ENCODE measurements at regions of chr11 and their contacts with region 1.

Region 1: DNA sequence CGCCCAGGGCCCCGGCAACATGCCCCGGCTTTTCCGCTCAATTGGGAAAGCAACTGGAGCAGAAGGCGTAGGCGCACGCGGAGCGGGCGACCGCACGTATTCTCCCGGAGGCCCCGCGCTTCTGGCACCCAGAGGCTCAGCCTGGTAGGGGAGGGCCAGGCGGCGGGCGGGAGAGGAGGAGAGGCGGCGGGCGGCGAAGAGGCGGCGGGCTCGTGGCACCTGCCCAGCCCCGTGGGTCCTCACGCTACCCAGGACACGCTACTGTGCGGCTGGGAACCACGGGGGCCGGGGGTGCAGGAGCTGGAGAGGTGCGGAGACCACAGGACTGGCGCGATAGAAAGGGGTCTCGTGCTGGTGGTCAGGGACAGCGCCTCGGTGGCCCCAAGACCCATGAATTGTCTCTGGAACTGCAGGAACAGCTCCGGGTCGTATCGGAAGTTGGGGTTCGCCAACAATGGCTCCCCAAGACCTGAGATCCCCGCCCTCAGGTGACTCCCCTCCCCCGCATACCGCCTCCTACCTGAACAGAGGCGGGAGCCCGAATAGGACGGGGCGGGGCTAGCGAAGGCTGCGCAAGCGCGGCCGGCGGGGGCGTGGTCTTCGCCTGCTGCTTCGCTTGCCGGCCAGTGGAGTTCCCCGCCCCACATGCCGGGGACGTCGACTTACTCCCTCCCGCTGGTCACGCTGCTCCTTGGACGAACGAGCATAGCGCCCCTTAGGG is at the start of gene SLC37A4:
- DNase-seq: peak; percentile 97
- H3K4me3 Mint-ChIP-seq: peak within 1 kb of the TSS; percentile 75
- H3K27ac Mint-ChIP-seq: peak within 1 kb of the TSS; percentile 70
- H3K4me1 Mint-ChIP-seq: peaks cover 15% of the 10 kb centered on the region
- H3K27me3 Mint-ChIP-seq: no peaks in the 10 kb centered on the region
- CTCF ChIP-seq: peak; percentile 71
- total RNA-seq, gene SLC37A4: 6.8 and 10.0 TPM in 2 replicates

Region 2: GRCh38 chr11:118649941-118650340 is 380.5 kb before region 1 on chr11:
- CTCF ChIA-PET with region 1: no interaction called
- POLR2A ChIA-PET with region 1: no interaction called
- intact Hi-C with region 1: no loop called
- DNase-seq: no peak
- H3K4me3 Mint-ChIP-seq: no peak overlapping the region
- H3K27ac Mint-ChIP-seq: no peak overlapping the region
- H3K4me1 Mint-ChIP-seq: no peaks in the 10 kb centered on the region
- H3K27me3 Mint-ChIP-seq: no peaks in the 10 kb centered on the region
- CTCF ChIP-seq: no peak

Region 3: DNA sequence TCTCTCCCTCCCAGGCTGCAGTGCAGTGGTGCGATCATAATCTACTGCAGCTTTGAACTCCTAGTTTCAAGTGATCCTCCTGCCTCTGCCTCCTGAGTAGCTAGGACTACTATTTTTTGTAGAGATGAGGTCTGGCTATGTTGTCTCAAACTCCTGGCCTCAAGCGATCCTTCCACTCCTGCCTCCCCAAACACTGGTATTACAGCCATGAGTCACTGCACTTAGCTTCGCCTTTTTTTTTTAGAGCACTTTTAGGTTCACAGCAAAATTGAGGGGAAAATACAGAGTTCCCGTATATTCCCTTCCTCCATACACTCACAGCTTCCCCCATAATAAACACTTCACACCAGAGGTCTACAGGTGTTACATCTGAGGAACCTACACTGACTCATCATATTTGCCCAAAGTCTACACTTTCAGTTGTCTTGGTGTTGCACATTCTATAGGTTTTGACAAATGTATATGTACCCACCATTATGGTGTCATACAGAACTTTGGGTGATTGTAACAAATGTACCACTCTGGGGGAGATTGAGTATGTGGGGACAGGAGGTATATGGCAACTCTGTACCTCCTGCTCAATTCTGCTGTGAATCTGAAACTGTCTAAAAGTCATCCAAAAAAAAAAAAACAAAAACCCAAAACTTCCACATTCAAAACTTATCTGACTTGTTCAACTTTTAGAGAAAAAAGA is 11.5 kb after region 1 on chr11:
- CTCF ChIA-PET with region 1: interaction called, 10 read pairs
- POLR2A ChIA-PET with region 1: no interaction called
- intact Hi-C with region 1: no loop called
- DNase-seq: no peak
- H3K4me3 Mint-ChIP-seq: no peak overlapping the region
- H3K27ac Mint-ChIP-seq: no peak overlapping the region
- H3K4me1 Mint-ChIP-seq: no peaks in the 10 kb centered on the region
- H3K27me3 Mint-ChIP-seq: no peaks in the 10 kb centered on the region
- CTCF ChIP-seq: no peak

Region 4: GRCh38 chr11:119057000-119057769 is 26.7 kb after region 1 on chr11 and contains the start of gene HYOU1:
- CTCF ChIA-PET with region 1: interaction called, 6 read pairs
- POLR2A ChIA-PET with region 1: interaction called, 8 read pairs
- intact Hi-C with region 1: loop called (anchors 2 kb)
- DNase-seq: peak; percentile 97
- H3K4me3 Mint-ChIP-seq: peak within 1 kb of the TSS; percentile 96
- H3K27ac Mint-ChIP-seq: peak within 1 kb of the TSS; percentile 98
- H3K4me1 Mint-ChIP-seq: peaks cover 19% of the 10 kb centered on the region
- H3K27me3 Mint-ChIP-seq: no peaks in the 10 kb centered on the region
- CTCF ChIP-seq: peak; percentile 29
- total RNA-seq, gene HYOU1: 398 and 664 TPM in 2 replicates

Region 5: DNA sequence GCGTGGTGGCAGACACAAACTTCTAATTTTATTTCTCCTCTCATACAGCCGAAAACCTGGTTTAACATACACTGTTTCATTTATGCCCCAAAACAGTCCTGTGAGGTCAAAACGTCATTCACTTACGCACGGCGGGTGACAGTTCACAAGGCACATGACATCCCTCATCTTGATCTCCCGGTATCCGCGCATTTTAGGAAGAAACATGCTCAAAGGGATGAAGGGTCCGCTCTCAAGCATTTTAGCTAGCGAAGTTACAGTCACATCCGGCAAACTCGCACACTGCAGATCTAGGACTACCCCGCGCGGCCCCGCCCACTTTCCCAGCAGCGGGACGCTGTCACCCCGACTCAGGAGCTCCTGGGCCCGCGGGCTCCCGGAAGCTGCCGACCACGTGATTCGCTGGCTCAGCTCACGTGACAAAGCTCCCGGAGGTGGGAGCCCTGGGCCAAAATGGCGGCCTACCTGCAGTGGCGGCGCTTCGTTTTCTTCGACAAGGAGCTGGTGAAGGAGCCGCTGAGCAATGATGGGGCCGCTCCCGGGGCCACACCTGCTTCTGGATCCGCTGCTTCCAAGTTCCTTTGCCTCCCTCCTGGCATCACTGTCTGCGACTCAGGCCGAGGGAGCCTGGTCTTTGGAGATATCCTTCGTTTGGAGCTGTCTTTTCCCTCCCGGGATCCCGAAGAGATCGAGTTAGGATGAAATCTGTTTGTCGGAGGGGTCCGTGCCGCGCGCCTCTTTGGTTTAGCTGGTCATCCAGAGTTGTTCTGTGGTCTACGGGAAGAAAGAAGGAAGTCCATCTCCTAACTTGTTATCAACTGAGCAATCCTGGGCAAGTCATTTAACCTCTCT is 37.1 kb after region 1 on chr11 and contains the start of gene VPS11:
- CTCF ChIA-PET with region 1: no interaction called
- POLR2A ChIA-PET with region 1: no interaction called
- intact Hi-C with region 1: no loop called
- DNase-seq: peak; percentile 95
- H3K4me3 Mint-ChIP-seq: peak within 1 kb of the TSS; percentile 87
- H3K27ac Mint-ChIP-seq: peak within 1 kb of the TSS; percentile 76
- H3K4me1 Mint-ChIP-seq: peaks cover 7% of the 10 kb centered on the region
- H3K27me3 Mint-ChIP-seq: no peaks in the 10 kb centered on the region
- CTCF ChIP-seq: no peak
- total RNA-seq, gene VPS11: 16.2 and 21.8 TPM in 2 replicates

Measured in MCF 10A (cell line).